Dendritic cell treated with granulocyte-macrophage colony-stimulating factor and Interleukin-4, amounts not matched to agents 40 ng/mL and 50 ng/mL, for 4 days (primary cell): ENCODE measurements at regions of chrX and their contacts with region 1.

Region 1: GRCh38 chrX:44542567-44543325 is at the start of gene FUNDC1:
- H3K4me3 Mint-ChIP-seq: peak within 1 kb of the TSS; percentile 86
- H3K27ac Mint-ChIP-seq: peak within 1 kb of the TSS; percentile 92
- H3K4me1 Mint-ChIP-seq: peaks cover 24% of the 10 kb centered on the region
- H3K27me3 Mint-ChIP-seq: no peaks in the 10 kb centered on the region

Region 2: GRCh38 chrX:44189116-44189515 is 353.6 kb before region 1 on chrX:
- intact Hi-C with region 1: no loop called
- H3K4me3 Mint-ChIP-seq: no peak overlapping the region
- H3K27ac Mint-ChIP-seq: no peak overlapping the region
- H3K4me1 Mint-ChIP-seq: peaks cover 14% of the 10 kb centered on the region
- H3K27me3 Mint-ChIP-seq: no peaks in the 10 kb centered on the region

Region 3: GRCh38 chrX:44872817-44873414 is 330.2 kb after region 1 on chrX and contains the start of gene KDM6A:
- intact Hi-C with region 1: loop called (anchors 10 kb)
- H3K4me3 Mint-ChIP-seq: peak within 1 kb of the TSS; percentile 79
- H3K27ac Mint-ChIP-seq: peak within 1 kb of the TSS; percentile 89
- H3K4me1 Mint-ChIP-seq: no peaks in the 10 kb centered on the region
- H3K27me3 Mint-ChIP-seq: no peaks in the 10 kb centered on the region

Region 4: DNA sequence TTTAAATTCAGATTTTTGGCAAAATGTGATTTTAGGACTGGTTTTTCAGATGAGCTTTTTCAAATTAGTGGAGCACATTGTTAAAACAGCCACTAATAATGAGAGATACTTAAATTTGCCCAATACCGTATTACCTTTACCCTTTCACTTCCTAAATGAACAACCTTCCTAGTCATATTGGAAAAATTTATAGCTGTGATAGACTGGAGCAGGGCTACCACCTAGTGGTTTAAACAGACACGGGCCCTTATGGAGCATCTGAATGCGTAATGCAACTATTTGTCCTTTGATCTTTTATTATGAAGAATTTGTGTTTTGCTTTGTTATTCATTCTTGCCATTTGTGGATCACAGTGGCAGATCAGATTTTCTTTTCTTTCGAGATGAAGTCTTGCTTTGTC is 403.0 kb after region 1 on chrX:
- intact Hi-C with region 1: loop called (anchors 5 kb)
- H3K4me3 Mint-ChIP-seq: no peak overlapping the region
- H3K27ac Mint-ChIP-seq: no peak overlapping the region
- H3K4me1 Mint-ChIP-seq: peaks cover 11% of the 10 kb centered on the region
- H3K27me3 Mint-ChIP-seq: no peaks in the 10 kb centered on the region